AG04449 (cell line): ENCODE measurements at regions of chr3 and their contacts with region 1.

Region 1: DNA sequence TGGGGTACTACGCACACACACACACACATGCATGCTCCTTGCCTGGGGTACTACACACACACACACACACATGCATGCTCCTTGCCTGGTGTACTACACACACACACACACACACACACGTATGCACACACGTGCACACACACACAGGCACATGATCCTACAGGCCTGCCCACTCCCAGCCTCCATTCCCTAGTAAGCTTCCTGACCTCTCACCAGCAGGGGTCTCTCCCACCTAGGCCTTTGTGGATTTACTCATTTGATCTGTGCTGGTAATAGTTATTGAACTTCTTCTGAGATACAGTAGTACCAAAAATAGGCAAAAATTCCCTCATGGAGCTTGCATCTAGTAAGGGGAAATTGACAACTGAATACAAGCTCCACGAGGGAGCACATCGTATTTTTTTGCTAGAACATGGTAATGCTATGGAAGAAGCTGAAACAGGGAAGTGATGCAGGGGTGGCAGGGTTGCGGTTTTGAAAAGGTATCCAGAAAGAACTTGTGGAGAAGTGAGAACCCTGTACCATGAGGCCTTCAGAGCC is 19.1 kb downstream of the TTC21A start:
- DNase-seq: no peak
- H3K4me3 ChIP-seq: no peak overlapping the region
- CTCF ChIP-seq: peak; percentile 80

Region 2: GRCh38 chr3:39107388-39108199 is 19.0 kb before region 1 on chr3 and contains the starts of genes GORASP1 and TTC21A:
- CTCF ChIA-PET with region 1: interaction called, 21 read pairs
- POLR2A ChIA-PET with region 1: no interaction called
- DNase-seq: no peak
- H3K4me3 ChIP-seq: peak within 1 kb of the TSS; percentile 89
- CTCF ChIP-seq: no peak

Region 3: DNA sequence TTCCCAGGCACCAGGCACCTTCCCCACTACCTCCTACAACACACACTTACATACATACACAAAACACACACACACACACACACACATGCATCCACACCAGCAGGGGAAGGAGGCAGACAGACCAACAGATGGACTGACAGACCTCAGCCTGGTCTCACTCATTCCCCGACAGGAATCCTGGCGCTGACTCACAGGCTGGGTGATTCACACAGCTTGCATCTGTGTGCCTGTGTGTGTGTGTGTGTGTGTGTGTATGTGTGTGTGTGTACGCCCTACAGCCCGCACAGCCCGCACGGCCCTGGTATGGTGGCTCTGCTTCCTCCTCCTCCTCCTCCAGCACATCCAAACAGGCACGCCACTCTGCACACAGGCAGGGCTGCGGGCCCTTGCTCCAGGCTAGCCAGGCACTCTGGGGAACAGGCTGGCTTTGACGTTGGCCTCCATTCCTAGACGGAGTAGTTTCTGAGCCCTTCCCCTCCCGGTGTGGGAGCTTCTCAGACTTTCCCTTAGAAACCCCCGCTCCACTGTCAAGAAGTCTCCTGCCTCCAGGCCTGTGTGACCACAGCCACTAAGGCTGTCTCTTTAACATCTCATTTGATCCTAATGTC is 20.5 kb after region 1 on chr3:
- CTCF ChIA-PET with region 1: interaction called, 26 read pairs
- POLR2A ChIA-PET with region 1: interaction called, 7 read pairs
- DNase-seq: peak; percentile 98
- H3K4me3 ChIP-seq: peak overlapping the region; percentile 32
- CTCF ChIP-seq: no peak

Region 4: DNA sequence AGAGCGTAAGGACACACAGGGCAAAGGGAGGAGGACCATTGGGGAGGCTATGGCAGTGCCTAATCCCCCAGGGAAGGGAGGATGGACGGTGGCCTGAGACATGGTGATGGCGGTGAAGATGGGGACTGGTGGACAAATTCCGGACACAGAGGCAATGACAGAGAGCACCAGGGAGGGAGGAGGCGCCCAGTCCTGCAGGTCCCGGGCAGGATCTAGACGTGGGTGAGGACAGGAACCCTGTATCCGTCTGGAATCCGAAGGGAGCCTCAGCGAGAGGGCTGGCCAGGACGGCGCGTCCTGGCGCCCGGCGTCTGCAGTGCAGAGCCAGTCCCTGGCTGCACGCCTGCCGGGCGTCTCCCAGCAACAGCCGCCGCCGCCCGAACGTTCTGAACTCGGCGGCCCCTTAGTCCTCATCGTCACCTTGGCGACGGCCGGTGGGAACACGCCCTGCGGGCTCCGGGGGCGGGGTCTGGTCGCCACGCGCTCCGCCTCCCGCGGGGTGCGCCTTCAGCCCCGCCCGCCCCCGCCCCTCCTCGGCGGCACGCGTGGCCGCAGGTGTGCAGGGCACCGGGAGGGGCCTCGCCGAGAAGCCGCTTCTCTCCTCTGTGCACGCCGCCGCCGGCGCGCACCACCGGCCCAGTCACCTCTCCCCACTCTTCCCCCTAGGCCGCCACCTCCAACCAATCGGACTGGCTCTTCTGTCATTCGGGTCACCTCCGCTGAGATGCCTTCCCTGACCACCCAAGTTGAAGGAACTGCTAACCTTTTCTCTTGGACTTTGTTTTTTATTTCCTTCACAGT is 54.1 kb after region 1 on chr3:
- CTCF ChIA-PET with region 1: interaction called, 26 read pairs
- POLR2A ChIA-PET with region 1: no interaction called
- DNase-seq: no peak
- H3K4me3 ChIP-seq: peak overlapping the region; percentile 44
- CTCF ChIP-seq: peak; percentile 23

Region 5: DNA sequence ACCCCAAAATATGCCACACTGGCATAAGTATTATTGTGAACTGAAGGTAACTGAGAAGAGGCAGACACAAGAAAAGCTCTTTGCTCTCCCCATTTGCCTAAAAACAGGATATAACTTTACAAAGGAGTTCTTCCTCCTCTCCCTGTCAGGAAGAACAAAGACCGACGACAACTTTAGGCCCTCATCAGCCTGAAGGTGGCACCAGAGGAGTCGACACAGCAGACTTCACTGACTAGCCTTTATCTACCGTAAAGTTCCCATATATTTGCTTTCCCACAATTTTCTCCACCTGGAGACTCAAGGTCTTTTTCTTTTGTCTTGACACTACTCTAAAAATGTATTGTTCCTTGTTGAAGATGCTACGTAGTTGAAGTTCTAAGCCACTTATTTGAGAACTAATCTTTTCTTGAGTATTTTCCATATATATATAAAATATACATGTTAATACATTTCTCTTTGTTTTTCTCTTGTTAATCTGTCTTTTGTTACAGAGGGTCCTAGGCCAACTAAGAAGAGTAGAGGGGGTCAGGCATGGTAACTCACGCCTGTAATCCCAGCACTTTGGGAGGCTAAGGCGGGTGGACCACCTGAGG is 82.0 kb after region 1 on chr3:
- CTCF ChIA-PET with region 1: interaction called, 13 read pairs
- POLR2A ChIA-PET with region 1: no interaction called
- DNase-seq: no peak
- H3K4me3 ChIP-seq: no peak overlapping the region
- CTCF ChIP-seq: peak; percentile 77

Region 6: DNA sequence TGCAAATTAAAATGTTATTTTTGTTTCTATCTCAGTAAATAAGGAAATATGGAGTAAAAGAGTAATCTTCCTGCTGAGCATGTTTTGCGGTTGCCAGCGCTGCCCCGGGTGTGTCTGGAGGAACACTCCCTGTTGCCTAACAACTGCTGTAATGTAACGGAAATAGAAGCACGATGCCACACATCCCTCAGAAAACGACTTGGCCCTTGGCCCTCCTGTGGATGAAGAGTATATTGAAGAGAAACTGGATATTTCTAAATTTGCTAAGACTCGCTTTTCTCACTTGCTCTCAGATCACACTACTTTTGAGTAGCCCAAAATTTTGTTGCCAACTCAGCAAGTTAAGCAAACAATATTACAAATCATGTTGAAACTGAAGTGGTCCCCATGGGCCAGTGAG is 134.4 kb after region 1 on chr3:
- CTCF ChIA-PET with region 1: interaction called, 14 read pairs
- POLR2A ChIA-PET with region 1: no interaction called
- DNase-seq: peak; percentile 67
- H3K4me3 ChIP-seq: no peak overlapping the region
- CTCF ChIP-seq: no peak

Region 7: DNA sequence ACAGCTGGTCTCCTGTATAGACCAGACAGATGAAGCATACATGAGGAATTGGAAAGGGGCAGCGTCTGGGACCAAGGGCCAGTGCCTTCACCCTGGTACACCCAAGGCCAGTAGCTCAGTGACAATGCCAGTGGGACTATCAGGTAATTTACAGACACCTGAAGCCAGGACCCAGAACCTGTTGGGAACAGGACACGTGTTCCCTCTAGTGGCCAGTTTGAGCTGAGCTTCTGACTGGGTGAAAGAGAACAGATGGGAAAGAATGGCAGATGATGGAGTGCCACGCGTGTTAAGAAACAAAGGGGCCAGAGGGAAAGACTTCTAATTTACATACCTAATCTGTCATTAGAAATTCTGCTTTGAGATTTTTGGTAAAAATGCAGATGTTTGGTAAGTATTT is 251.5 kb after region 1 on chr3:
- CTCF ChIA-PET with region 1: interaction called, 13 read pairs
- POLR2A ChIA-PET with region 1: no interaction called
- DNase-seq: no peak
- H3K4me3 ChIP-seq: no peak overlapping the region
- CTCF ChIP-seq: peak; percentile 59